Left cardiac atrium (tissue), 4 donors: ENCODE measurements at regions of chr4 and their contacts with region 1.

Region 1: GRCh38 chr4:17324386-17324830 is 187.5 kb downstream of the QDPR start:
- DNase-seq: peak; percentile 55
- ATAC-seq: peak; percentile 72 to 74

Region 2: DNA sequence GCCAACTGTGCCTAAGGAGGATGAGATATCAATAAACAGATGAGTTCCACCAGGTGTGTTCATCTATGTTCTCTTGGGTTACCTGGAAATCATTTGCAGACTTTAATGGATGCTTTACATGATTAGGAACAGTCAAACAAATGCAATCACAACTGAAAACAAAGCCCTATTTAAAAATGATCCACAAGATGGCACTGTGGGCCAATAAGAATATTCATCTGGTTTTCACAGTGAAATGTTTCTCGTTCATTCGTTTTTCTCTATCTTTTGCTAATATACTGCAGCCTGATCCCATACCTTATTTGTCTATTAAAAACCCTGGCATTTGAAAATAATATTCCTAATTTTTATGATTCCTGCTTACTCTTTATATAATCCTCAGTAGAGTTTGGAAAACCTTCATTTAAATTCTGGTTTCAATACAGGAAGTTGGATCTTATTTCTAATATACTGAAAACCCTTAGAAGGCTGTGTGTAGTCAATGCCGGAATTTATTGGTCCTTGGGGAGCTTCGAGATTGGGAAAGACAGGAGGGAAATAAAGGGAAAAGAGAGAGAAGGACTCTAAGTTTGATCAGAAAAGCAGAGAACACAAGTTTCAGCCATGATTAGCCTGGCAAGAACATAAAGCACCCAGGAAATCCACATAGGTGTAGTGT is 1034.4 kb before region 1 on chr4:
- intact Hi-C with region 1: loop called in 1 of 2 experiments (anchors 5 kb)
- DNase-seq: no peak
- ATAC-seq: no peak

Region 3: GRCh38 chr4:16516796-16517439 is 807.5 kb before region 1 on chr4:
- intact Hi-C with region 1: loop called in 1 of 2 experiments (anchors 5 kb)
- DNase-seq: peak; percentile 57
- ATAC-seq: peak; percentile 77 to 79

Region 4: GRCh38 chr4:16794816-16795445 is 529.5 kb before region 1 on chr4:
- intact Hi-C with region 1: loop called in 1 of 2 experiments (anchors 2 kb)
- DNase-seq: peak; percentile 60
- ATAC-seq: peak; percentile 65 to 67

Region 5: GRCh38 chr4:16914208-16914607 is 410.2 kb before region 1 on chr4:
- intact Hi-C with region 1: loop called (anchors 5 kb)
- DNase-seq: no peak
- ATAC-seq: peak in 1 of 2 donors; percentile 65

Region 6: DNA sequence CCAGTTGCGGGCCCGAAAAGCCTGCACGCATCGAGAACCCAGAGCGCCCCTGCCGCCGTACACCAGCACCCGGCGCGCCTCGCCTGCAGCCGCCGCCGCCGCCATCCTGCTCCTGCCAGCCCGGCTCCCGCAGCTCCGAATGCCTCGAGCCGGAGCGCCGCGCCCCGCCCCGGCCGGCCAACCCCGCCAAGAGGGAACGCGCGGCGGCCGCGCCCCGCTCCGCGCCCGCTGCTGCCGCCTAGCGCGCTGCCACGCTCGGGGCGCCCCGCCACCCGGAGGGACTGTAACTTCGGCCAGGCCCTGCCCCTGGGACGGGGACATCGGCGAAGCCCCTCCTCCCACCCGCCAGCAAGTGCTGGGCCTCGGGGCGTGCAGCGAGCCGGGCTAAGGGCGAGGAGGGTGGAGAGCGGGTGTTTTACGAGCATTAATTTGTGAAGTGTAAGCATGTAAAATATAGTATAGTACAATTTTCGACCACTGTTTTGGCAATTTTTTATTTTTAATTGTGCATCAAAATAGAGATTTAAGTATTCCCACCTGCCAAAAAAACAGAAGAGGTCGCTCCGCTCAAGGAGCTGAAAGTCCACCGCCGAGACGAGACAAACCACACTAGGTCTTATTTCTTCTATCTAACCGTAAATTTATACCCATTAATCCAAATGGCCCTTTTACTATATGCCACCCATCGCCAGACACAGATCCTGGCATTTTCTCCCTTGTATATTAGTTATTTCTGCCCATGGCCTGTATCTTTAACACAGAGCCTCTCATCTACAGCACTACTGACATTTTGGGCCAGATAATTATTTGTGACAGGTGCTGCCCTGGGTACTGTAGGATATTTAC is 187.8 kb after region 1 on chr4 and contains the start of gene QDPR:
- intact Hi-C with region 1: no loop called
- DNase-seq: peak; percentile 90
- ATAC-seq: peak; percentile 95 to 96
- total RNA-seq, gene QDPR: 38.3 to 45.4 TPM